IMR-90 (cell line): ENCODE measurements at regions of chr4 and their contacts with region 1.

Region 1: GRCh38 chr4:102022343-102022742 is 231.8 kb downstream of the BANK1 start:
- DNase-seq: no peak
- ATAC-seq: no peak
- H3K4me3 ChIP-seq: no peak overlapping the region
- H3K27ac ChIP-seq: no peak overlapping the region
- H3K4me1 ChIP-seq: no peaks in the 10 kb centered on the region
- H3K27me3 ChIP-seq: no peaks in the 10 kb centered on the region
- CTCF ChIP-seq: no peak
- POLR2A ChIP-seq: no peak
- RAD21 ChIP-seq: no peak

Region 2: DNA sequence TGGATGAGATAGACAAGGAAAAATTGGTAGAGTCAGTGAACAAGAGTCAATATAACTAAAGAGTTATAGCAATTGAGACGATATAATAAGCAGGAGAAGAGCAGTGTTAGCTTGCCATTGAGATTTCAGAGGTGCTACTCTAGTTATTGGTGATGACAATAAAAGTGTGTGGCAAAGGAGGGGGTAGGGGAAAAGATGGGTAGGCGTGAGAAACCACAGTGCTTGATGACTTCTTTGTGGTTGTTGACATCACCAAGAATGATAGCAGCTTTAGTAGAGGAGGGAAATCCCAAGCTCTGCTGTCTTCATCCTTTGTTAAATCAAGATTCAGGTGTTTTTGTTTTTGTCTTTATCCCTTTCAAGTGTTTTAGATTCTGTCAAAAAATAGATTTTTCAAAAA is 495.2 kb before region 1 on chr4:
- CTCF ChIA-PET with region 1: no interaction called
- POLR2A ChIA-PET with region 1: no interaction called
- dilution Hi-C with region 1: no loop called
- in situ Hi-C with region 1: no loop called
- intact Hi-C with region 1: no loop called
- DNase-seq: no peak
- ATAC-seq: no peak
- H3K4me3 ChIP-seq: no peak overlapping the region
- H3K27ac ChIP-seq: no peak overlapping the region
- H3K4me1 ChIP-seq: no peaks in the 10 kb centered on the region
- H3K27me3 ChIP-seq: no peaks in the 10 kb centered on the region
- CTCF ChIP-seq: no peak
- POLR2A ChIP-seq: no peak
- RAD21 ChIP-seq: no peak

Region 3: DNA sequence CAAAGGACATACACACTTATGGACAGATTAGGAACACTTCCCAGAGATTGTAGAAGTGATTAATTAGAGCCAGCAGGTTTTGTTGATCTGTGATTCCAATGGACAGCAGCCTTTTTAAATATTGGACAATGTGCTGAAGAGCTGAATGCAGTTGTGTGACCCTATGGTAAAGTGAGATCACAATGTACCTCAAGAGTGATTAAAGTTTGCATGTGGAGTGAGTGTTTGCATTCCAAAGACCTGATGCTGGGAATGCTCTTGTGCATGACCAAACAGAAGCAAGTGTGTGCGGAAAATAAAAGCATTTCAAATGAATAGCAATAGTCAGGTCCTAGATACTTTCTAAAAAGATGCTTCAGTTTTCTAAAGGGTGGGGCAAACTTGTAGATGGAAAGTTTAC is 77.7 kb before region 1 on chr4:
- CTCF ChIA-PET with region 1: no interaction called
- POLR2A ChIA-PET with region 1: no interaction called
- dilution Hi-C with region 1: no loop called
- in situ Hi-C with region 1: no loop called
- intact Hi-C with region 1: loop called (anchors 5 kb)
- DNase-seq: peak; percentile 56
- ATAC-seq: no peak
- H3K4me3 ChIP-seq: no peak overlapping the region
- H3K27ac ChIP-seq: no peak overlapping the region
- H3K4me1 ChIP-seq: no peaks in the 10 kb centered on the region
- H3K27me3 ChIP-seq: no peaks in the 10 kb centered on the region
- CTCF ChIP-seq: no peak
- POLR2A ChIP-seq: no peak
- RAD21 ChIP-seq: no peak

Region 4: DNA sequence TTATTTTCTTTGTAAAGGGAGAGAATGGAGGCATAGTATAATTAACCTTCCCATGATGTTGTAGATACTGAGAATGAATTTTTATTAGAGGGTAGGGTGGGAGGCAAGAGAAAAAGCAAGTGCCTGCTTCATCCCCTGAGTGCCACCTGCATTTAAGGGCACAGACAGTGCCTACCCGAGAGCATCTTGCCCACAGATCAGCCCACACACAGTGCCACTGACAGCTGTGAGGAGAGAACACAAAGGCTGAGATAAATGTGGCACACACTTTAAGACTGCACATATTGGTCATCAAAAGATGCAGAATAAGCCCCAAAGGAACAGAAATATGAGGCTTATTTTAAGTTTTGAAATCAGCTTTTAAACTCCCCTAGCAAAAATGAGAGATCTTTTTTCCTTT is 72.1 kb after region 1 on chr4:
- CTCF ChIA-PET with region 1: no interaction called
- POLR2A ChIA-PET with region 1: no interaction called
- dilution Hi-C with region 1: no loop called
- in situ Hi-C with region 1: no loop called
- intact Hi-C with region 1: no loop called
- DNase-seq: no peak
- ATAC-seq: no peak
- H3K4me3 ChIP-seq: no peak overlapping the region
- H3K27ac ChIP-seq: no peak overlapping the region
- H3K4me1 ChIP-seq: no peaks in the 10 kb centered on the region
- H3K27me3 ChIP-seq: no peaks in the 10 kb centered on the region
- CTCF ChIP-seq: no peak
- POLR2A ChIP-seq: no peak
- RAD21 ChIP-seq: no peak

Region 5: GRCh38 chr4:102157984-102158383 is 135.6 kb after region 1 on chr4:
- CTCF ChIA-PET with region 1: no interaction called
- POLR2A ChIA-PET with region 1: no interaction called
- dilution Hi-C with region 1: no loop called
- in situ Hi-C with region 1: no loop called
- intact Hi-C with region 1: no loop called
- DNase-seq: no peak
- ATAC-seq: no peak
- H3K4me3 ChIP-seq: no peak overlapping the region
- H3K27ac ChIP-seq: no peak overlapping the region
- H3K4me1 ChIP-seq: no peaks in the 10 kb centered on the region
- H3K27me3 ChIP-seq: no peaks in the 10 kb centered on the region
- CTCF ChIP-seq: no peak
- POLR2A ChIP-seq: no peak
- RAD21 ChIP-seq: no peak

Region 6: GRCh38 chr4:102586644-102587021 is 564.3 kb after region 1 on chr4:
- CTCF ChIA-PET with region 1: no interaction called
- POLR2A ChIA-PET with region 1: no interaction called
- dilution Hi-C with region 1: no loop called
- in situ Hi-C with region 1: no loop called
- intact Hi-C with region 1: no loop called
- DNase-seq: no peak
- ATAC-seq: no peak
- H3K4me3 ChIP-seq: no peak overlapping the region
- H3K27ac ChIP-seq: no peak overlapping the region
- H3K4me1 ChIP-seq: no peaks in the 10 kb centered on the region
- H3K27me3 ChIP-seq: no peaks in the 10 kb centered on the region
- CTCF ChIP-seq: no peak
- POLR2A ChIP-seq: no peak
- RAD21 ChIP-seq: no peak